ENCODE measurements at regions of chr19 and their contacts with region 1.

Region 1: GRCh38 chr19:11738746-11739620 is at the start of gene ZNF823:
- DNase-seq: peak; percentile 99
- ATAC-seq: peak; percentile 93
- H3K4me3 ChIP-seq: peak within 1 kb of the TSS; percentile 89 to 91
- H3K27ac ChIP-seq: peak within 1 kb of the TSS; percentile 82
- H3K4me1 ChIP-seq: peaks cover 16 to 29% of the 10 kb centered on the region in 2 experiments
- H3K27me3 ChIP-seq: no peaks in the 10 kb centered on the region
- CTCF ChIP-seq: no peak
- POLR2A ChIP-seq: peak; percentile 39
- RAD21 ChIP-seq: no peak
- total RNA-seq, gene ZNF823: 4.7 TPM

Region 2: DNA sequence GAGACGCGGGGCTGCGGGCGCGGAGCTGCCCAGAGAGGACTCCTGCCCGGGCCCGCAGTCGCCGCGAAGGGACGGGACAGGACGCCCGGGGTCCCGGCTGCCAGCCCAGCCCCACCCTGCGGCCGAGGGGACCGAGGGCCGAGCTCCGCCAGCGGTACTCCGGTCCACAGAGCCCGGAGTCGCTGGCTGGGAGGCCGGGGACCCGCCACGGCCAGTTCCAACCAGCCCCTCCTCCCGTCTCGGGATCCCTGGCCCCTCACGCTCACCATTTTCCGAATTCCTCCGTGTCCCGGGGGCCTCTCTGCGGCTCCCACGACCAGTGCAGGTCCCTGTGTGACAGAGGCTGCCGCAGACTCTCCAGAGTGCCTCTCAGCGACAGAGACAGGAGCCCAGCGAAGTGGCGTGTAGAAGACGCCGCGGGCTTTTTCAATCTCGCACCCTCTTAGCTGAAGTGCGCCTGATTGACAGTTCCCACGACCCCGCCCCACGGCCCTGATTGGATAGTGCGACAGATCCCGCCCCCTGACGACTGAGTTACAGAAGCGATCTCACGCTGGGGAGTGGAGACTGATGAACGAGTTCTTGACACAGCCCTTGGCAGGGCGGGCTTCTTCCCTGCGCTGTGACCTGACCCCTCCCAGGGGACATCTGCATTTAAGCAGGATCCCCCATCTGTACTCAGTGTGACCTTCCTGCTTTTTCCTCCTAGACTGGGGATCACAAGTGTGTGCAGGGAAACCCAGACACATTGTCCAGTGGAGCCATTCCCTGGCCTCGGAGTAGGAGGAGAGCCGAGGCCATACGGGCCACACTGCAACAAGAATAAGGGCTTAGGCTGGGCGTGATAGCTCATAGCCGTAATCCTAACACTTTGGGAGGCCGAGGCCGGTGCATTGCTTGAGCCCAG is 44.2 kb before region 1 on chr19:
- CTCF ChIA-PET with region 1: interaction called, 5 read pairs
- POLR2A ChIA-PET with region 1: interaction called, 5 read pairs
- RAD21 ChIA-PET with region 1: no interaction called
- intact Hi-C with region 1: loop called (anchors 5 kb)
- DNase-seq: peak; percentile 91
- ATAC-seq: peak; percentile 96
- H3K4me3 ChIP-seq: peak overlapping the region; percentile 81 to 89
- H3K27ac ChIP-seq: peak overlapping the region; percentile 77
- H3K4me1 ChIP-seq: peaks cover 2 to 15% of the 10 kb centered on the region in 2 experiments; a peak in 3 of 4 replicates
- H3K27me3 ChIP-seq: no peaks in the 10 kb centered on the region
- CTCF ChIP-seq: no peak
- POLR2A ChIP-seq: peak; percentile 97
- RAD21 ChIP-seq: no peak

Region 3: GRCh38 chr19:12400633-12401502 is 661.9 kb after region 1 on chr19 and contains the start of gene ZNF799:
- CTCF ChIA-PET with region 1: no interaction called
- POLR2A ChIA-PET with region 1: no interaction called
- RAD21 ChIA-PET with region 1: no interaction called
- intact Hi-C with region 1: loop called (anchors 2 kb)
- DNase-seq: peak; percentile 94
- ATAC-seq: peak; percentile 95
- H3K4me3 ChIP-seq: peak within 1 kb of the TSS; percentile 72 to 82
- H3K27ac ChIP-seq: peak within 1 kb of the TSS; percentile 76
- H3K4me1 ChIP-seq: peaks cover 3 to 9% of the 10 kb centered on the region in 2 experiments; a peak in 2 of 4 replicates
- H3K27me3 ChIP-seq: no peaks in the 10 kb centered on the region
- CTCF ChIP-seq: 0 out of 6 replicates have a peak, but pooled peaks of 1 of the 3 experiments have one; percentile 16
- POLR2A ChIP-seq: no peak
- RAD21 ChIP-seq: no peak
- total RNA-seq, gene ZNF799: 3.6 TPM

Measured in HCT116 (cell line).